Activated CD4-positive, alpha-beta T cell treated with anti-CD3 and anti-CD28 coated beads, Interleukin-2, amount 10 ng/mL, durations not matched to agents 7 days and 5 days (primary cell): ENCODE measurements at regions of chr14 and their contacts with region 1.

Region 1: DNA sequence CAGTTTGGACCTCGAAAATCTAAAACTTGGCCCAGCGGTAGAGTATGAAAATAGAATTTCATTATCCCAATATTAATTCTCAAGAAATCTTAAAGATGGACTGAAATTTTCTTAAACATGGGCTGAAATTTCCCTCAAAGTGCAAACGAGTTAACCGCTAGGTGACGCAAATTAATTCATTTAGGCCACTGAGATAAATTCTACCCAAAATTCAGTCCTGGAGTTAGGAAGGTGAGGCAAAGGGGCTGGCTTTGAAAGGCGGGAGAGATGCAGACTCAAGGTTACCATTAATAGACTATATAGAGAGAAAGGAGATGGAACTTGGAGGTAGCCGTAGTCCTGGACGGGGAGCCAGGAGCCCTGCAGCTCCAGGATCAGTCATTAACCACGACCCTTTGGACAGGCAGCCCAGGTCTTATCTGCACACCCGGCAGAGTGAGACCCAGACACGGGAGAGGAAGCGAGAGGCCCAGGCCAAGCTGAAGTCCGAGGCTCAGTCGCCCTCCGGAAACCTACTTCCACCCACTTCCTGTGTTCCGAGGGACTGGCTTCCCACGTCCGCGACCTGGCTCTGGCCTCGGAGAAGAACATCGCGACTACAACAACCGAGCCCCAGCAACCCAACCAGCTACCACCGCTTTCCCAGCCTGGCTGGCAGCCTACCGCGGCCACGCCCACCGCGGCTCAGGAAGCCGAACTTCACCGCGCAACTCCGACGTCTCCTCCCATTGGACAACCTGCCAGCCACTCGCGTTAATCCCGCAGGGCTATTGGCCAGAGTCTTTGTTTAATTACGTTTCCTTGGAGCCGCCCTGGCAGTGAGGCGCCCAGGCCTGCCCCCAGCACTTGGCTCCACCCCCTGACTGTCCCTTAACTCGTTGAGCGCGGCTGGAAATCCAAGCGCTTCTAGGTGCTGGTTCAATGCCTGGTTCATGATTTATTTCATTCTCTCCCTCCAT is at the start of gene EFCAB11:
- DNase-seq: peak; percentile 97
- H3K4me3 Mint-ChIP-seq: peak within 1 kb of the TSS; percentile 92
- H3K27ac Mint-ChIP-seq: peak within 1 kb of the TSS; percentile 89
- H3K4me1 Mint-ChIP-seq: peaks cover 48% of the 10 kb centered on the region
- H3K27me3 Mint-ChIP-seq: no peaks in the 10 kb centered on the region
- total RNA-seq, gene EFCAB11: 7.7 to 8.6 TPM

Region 2: DNA sequence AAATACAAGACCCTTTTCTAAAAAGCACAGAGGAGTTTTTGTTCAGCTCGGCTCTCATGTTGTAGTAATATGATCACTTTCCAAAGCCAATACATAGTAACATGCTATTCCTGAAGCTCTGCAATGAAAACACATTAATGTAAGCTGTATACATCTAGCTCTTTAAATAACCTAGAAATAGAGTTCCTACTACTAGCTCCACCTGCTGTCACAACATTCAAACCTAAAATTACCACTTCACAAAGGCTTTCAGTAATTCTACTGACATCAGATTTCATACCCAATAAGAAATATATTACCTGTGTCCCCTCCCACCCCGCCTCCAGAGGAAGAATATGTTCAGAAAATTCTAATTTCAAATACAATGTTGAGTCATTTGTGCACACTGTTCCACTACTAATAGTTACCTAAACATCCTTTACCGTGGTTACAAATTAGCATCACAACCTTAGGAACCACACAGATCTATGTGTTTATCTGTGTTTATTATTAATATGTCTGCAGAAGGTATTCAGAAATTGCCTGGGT is 17.6 kb before region 1 on chr14:
- CTCF ChIA-PET with region 1: interaction called, 12 read pairs
- POLR2A ChIA-PET with region 1: no interaction called
- DNase-seq: no peak
- H3K4me3 Mint-ChIP-seq: no peak overlapping the region
- H3K27ac Mint-ChIP-seq: no peak overlapping the region
- H3K4me1 Mint-ChIP-seq: no peaks in the 10 kb centered on the region
- H3K27me3 Mint-ChIP-seq: no peaks in the 10 kb centered on the region

Region 3: GRCh38 chr14:89973234-89973823 is 19.0 kb after region 1 on chr14:
- CTCF ChIA-PET with region 1: interaction called, 12 read pairs
- POLR2A ChIA-PET with region 1: no interaction called
- DNase-seq: peak; percentile 65
- H3K4me3 Mint-ChIP-seq: no peak overlapping the region
- H3K27ac Mint-ChIP-seq: no peak overlapping the region
- H3K4me1 Mint-ChIP-seq: no peaks in the 10 kb centered on the region
- H3K27me3 Mint-ChIP-seq: no peaks in the 10 kb centered on the region